HEK293 (cell line): ENCODE measurements at regions of chr9 and their contacts with region 1.

Region 1: GRCh38 chr9:5186416-5187169 is 1.2 kb upstream of the INSL6 start:
- H3K4me3 ChIP-seq: no peak overlapping the region
- H3K27ac ChIP-seq: no peak overlapping the region
- H3K4me1 ChIP-seq: no peaks in the 10 kb centered on the region
- CTCF ChIP-seq: peak; percentile 73; the same call in 1 of the 2 replicates

Region 2: DNA sequence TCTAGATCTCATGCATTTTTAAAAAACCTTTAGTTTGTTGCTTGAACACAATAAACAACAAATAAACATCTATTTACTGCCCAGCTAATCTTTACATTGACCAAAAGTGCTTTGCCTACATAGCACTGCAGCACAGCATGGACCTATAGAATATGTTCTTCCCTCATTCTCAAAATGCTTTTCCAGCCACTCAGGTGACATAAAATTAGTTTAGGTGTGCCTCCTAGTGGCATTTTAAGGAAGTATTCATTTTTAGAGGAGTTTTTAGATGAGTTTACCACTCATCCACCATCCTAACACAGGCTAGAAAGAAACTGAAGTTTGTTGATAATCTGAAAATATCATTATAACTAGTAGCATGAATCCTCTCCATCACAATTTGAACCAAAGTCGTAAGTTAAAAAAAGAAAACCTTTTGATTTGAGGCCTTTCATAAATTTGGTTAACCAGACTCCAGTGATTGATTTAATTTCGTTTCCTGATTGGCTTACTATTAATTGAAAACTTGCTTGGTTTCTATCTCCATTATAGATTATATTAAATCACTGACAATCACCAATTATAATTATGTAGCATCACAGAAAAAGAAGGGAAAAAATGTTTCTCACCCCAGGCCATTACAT is 238.5 kb after region 1 on chr9:
- CTCF ChIA-PET with region 1: interaction called, 46 read pairs
- POLR2A ChIA-PET with region 1: no interaction called
- H3K4me3 ChIP-seq: no peak overlapping the region
- H3K27ac ChIP-seq: no peak overlapping the region
- H3K4me1 ChIP-seq: no peaks in the 10 kb centered on the region
- CTCF ChIP-seq: no peak

Region 3: GRCh38 chr9:5442400-5443011 is 255.9 kb after region 1 on chr9:
- CTCF ChIA-PET with region 1: interaction called, 22 read pairs
- POLR2A ChIA-PET with region 1: interaction called, 3 read pairs
- H3K4me3 ChIP-seq: no peak overlapping the region
- H3K27ac ChIP-seq: no peak overlapping the region
- H3K4me1 ChIP-seq: no peaks in the 10 kb centered on the region
- CTCF ChIP-seq: no peak

Region 4: DNA sequence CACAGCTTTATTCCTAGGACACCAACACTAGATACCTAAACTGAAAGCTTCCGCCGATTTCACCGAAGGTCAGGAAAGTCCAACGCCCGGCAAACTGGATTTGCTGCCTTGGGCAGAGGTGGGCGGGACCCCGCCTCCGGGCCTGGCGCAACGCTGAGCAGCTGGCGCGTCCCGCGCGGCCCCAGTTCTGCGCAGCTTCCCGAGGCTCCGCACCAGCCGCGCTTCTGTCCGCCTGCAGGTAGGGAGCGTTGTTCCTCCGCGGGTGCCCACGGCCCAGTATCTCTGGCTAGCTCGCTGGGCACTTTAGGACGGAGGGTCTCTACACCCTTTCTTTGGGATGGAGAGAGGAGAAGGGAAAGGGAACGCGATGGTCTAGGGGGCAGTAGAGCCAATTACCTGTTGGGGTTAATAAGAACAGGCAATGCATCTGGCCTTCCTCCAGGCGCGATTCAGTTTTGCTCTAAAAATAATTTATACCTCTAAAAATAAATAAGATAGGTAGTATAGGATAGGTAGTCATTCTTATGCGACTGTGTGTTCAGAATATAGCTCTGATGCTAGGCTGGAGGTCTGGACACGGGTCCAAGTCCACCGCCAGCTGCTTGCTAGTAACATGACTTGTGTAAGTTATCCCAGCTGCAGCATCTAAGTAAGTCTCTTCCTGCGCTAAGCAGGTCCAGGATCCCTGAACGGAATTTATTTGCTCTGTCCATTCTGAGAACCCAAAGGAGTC is 263.9 kb after region 1 on chr9 and contains the start of gene CD274:
- CTCF ChIA-PET with region 1: interaction called, 11 read pairs
- POLR2A ChIA-PET with region 1: no interaction called
- H3K4me3 ChIP-seq: peak within 1 kb of the TSS; percentile 32
- H3K27ac ChIP-seq: no peak within 1 kb of the TSS
- H3K4me1 ChIP-seq: no peaks in the 10 kb centered on the region
- CTCF ChIP-seq: peak; percentile 83